KBM-7 (cell line): ENCODE measurements at regions of chr10 and their contacts with region 1.

Region 1: DNA sequence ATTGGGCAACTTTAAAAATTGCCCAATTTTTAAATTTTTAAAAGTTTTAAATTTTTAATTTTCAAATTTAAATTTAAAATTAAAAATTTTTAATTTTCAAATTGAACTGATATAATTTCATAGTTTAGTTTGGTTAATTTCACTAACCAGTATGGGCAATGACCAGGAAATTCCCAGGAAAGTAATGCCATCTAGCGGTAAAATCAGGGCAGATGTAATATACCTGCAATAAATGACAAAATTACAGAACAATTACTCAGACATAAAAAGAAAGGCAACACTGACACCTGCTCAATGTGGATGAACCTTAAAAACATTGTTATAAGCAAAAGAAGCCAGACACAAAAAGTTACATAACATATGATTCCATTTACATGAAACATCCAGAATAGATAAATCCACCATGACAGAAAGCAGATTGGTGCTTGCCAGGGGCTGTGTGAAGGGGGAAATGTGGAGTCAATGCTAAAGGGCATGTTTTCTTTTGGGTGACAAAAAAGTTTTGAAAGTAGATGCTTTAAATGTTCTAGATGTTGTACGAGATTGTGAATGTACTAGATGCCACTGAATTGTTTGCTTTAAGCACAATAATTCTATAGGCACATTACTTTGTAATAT is 28.6 kb upstream of the SLC16A12 start:
- DNase-seq: peak; percentile 46

Region 2: GRCh38 chr10:89426230-89426868 is 137.6 kb before region 1 on chr10:
- in situ Hi-C with region 1: loop called (anchors 25 kb)
- DNase-seq: peak; percentile 67